Activated CD4-positive, alpha-beta memory T cell treated with anti-CD3 and anti-CD28 coated beads for 36 hours (primary cell): ENCODE measurements at regions of chr19 and their contacts with region 1.

Region 1: DNA sequence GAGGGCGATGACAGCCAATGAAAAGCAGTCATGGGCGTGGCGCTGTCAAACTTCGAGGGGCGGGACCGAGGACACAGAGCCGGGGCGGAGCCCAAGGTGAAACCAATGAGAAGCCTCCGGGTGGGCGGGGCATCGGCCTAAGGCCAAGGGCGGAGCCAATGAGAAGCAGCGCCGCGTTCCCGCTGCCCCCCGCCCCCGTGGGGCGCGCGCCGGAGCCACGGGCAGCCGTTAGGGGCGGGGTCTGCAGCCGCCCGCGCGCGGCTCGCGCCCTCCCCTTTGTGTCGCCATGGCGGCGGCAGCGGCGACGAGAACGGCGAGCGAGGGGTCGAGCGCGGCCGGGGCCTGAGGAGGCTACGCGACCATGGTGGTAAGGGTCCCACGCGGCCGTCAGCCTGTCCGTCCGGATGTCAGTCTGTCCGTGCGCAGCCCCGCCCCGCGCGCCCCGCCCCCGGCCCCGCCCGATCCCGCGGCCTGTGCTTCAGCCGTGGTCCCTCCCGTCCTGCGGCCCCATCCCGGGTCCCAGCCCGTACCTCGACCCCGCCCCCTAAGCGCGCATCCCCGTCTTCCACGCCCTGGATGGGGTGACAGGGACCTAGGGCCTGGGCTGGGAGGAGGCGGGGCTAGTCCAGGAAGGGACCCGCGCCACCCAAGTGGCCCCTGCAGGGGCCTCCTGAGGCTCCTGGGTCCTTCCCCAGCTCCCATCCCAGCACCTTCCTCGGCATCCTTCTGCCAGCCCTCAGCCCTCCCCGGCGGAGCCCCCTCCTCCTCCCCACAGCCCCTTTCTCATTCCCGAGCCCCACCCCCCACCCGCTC is at the start of gene ARHGAP33:
- DNase-seq: peak; percentile 100
- H3K4me3 Mint-ChIP-seq: peak within 1 kb of the TSS; percentile 71
- H3K27ac Mint-ChIP-seq: peak within 1 kb of the TSS; percentile 15
- H3K4me1 Mint-ChIP-seq: peaks cover 15% of the 10 kb centered on the region
- H3K27me3 Mint-ChIP-seq: no peaks in the 10 kb centered on the region
- total RNA-seq, gene ARHGAP33: 35.0 to 39.3 TPM

Region 2: DNA sequence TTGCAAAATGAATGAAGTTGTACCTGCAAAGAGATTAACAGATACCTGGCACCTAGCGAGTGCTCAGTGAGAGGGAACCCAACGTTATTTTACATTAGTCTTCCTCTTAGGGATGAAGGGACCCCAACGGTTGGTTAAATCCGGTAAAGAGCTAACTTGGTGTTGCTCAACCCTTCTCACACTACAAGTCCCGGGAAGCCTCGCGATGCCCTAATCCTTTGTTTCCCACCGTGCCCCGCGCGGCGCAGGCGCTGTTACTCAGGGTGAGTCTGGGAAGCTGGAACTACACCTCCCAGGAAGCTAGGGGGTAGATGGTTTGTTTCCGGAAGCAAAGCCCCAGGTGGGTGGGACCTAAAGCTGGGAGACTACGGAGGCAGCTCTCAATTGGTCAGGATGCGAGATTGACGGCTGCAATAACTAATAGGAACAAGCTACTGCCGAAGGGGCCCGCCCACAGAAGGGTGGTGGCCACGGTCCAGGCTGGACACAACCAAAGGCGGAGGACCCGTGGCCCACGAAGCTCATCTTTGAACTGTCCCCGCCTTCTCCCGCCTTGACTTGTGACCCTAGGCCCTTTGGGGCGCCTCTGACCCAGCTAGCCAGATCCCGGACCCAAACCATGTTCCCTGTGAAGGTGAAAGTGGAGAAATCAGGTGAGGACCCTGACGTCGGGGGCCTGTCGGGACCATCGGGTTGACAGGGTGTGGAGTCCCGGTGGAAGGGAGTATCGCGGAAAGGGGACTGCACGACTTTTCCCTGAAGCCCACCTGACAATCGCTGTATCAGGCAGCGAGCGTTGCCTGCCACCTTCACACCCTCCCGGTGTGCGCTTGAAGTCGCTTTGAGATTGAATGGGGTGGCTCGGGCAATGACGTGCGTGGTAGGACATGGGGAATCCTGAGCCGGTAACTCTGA is 27.1 kb before region 1 on chr19 and contains the start of gene LIN37:
- CTCF ChIA-PET with region 1: interaction called, 3 read pairs
- POLR2A ChIA-PET with region 1: no interaction called
- intact Hi-C with region 1: loop called (anchors 1 kb)
- DNase-seq: peak; percentile 99
- H3K4me3 Mint-ChIP-seq: peak within 1 kb of the TSS; percentile 94
- H3K27ac Mint-ChIP-seq: peak within 1 kb of the TSS; percentile 88
- H3K4me1 Mint-ChIP-seq: peaks cover 42% of the 10 kb centered on the region
- H3K27me3 Mint-ChIP-seq: no peaks in the 10 kb centered on the region
- total RNA-seq, gene LIN37: 7.5 TPM

Region 3: DNA sequence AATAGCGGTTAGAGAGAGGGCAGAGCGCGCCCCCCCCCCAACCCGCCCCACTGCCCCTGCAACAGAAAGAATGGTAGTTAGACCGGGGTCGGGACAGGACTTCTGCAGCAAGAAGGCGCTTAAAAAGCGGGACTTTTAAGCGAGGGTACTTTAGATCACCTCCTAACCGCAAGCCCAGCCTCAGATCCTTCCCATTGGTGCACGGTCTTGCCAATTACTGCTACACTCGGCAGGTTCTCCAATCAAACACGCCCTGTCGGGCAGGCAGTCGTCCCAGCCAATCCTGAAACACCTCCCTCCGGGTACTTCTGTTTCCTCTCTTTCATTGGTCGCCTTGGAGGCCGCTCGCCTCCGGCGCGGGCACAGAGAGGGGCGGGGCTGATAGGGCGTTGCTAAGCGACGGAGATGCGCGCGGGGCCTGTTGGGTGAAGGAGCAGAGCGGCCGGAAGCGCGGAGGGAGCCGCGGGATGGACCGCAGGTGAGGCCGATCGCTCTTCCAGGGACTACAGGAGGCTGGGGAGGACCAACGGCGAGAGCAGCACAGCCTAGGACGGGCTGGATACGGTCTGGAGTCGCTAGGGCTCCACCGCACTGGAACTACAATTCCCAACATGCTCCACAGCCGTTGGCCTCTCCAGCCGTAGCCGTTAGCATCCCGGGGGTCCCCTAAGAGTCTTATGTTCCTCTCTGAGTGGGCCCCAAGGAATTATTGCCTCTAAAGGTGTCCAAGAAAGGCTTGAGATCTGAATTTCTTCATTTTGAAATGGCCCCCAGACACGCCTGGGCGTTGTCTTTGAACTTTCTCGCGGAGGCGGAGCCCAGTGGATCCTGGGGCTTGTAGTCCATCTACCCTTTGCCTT is 17.5 kb before region 1 on chr19 and contains the start of gene PROSER3:
- CTCF ChIA-PET with region 1: no interaction called
- POLR2A ChIA-PET with region 1: no interaction called
- intact Hi-C with region 1: loop called (anchors 1 kb)
- DNase-seq: peak; percentile 99
- H3K4me3 Mint-ChIP-seq: peak within 1 kb of the TSS; percentile 88
- H3K27ac Mint-ChIP-seq: peak within 1 kb of the TSS; percentile 91
- H3K4me1 Mint-ChIP-seq: peaks cover 27% of the 10 kb centered on the region
- H3K27me3 Mint-ChIP-seq: no peaks in the 10 kb centered on the region
- total RNA-seq, gene PROSER3: 38.4 to 40.0 TPM